Natural killer cell (primary cell): ENCODE measurements at regions of chr14 and their contacts with region 1.

Region 1: GRCh38 chr14:52351233-52352060 is 37.3 kb downstream of the PTGER2 start:
- DNase-seq: peak in 1 of 2 donors; percentile 34
- ATAC-seq: peak; percentile 41 to 51 (median 48)
- H3K4me3 ChIP-seq: no peak overlapping the region
- H3K4me3 Mint-ChIP-seq: peak overlapping the region; percentile 86
- H3K27ac ChIP-seq: peak overlapping the region; percentile 85
- H3K27ac Mint-ChIP-seq: peak overlapping the region; percentile 95
- H3K4me1 ChIP-seq: peaks cover 37% of the 10 kb centered on the region
- H3K4me1 Mint-ChIP-seq: peaks cover 75 to 83% of the 10 kb centered on the region in 2 donors
- H3K27me3 ChIP-seq: no peaks in the 10 kb centered on the region
- H3K27me3 Mint-ChIP-seq: no peaks in the 10 kb centered on the region
- CTCF ChIP-seq: no peak

Region 2: DNA sequence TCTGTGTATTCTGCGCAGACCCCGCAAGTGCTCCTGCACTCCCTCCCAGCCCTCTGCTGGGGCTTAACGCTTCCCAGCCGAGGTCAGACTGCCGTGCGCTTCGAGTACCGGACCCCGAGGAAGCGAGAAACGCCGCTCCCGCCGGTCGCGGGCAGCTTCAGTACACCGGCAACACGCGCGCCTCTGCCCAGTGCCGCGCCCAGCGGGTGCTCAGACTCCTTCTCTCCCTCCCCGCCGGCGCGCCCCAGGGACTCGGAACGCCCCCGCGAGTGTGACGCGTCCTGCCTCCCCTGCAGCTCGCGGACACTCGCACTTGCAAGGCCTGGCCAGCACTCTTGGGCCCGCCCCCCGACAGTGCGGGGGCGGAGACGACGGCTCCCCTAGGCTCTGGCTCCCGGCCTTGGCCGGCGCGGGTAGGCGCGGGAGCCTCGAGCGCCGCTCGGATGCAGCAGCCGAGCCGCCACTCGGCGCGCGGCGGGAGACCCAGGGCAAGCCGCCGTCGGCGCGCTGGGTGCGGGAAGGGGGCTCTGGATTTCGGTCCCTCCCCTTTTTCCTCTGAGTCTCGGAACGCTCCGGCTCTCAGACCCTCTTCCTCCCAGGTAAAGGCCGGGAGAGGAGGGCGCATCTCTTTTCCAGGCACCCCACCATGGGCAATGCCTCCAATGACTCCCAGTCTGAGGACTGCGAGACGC is 37.4 kb before region 1 on chr14 and contains the start of gene PTGER2:
- intact Hi-C with region 1: loop called (anchors 2 kb)
- DNase-seq: peak; percentile 79 to 81
- ATAC-seq: peak; percentile 75 to 85 (median 78)
- H3K4me3 ChIP-seq: peak within 1 kb of the TSS; percentile 86
- H3K4me3 Mint-ChIP-seq: peak within 1 kb of the TSS; percentile 98
- H3K27ac ChIP-seq: peak within 1 kb of the TSS; percentile 78
- H3K27ac Mint-ChIP-seq: peak within 1 kb of the TSS; percentile 95 to 99
- H3K4me1 ChIP-seq: peaks cover 44% of the 10 kb centered on the region
- H3K4me1 Mint-ChIP-seq: peaks cover 86 to 95% of the 10 kb centered on the region in 2 donors
- H3K27me3 ChIP-seq: no peaks in the 10 kb centered on the region
- H3K27me3 Mint-ChIP-seq: no peaks in the 10 kb centered on the region
- CTCF ChIP-seq: no peak
- total RNA-seq, gene PTGER2: 55.3 to 67.9 (median 60.6) TPM

Region 3: DNA sequence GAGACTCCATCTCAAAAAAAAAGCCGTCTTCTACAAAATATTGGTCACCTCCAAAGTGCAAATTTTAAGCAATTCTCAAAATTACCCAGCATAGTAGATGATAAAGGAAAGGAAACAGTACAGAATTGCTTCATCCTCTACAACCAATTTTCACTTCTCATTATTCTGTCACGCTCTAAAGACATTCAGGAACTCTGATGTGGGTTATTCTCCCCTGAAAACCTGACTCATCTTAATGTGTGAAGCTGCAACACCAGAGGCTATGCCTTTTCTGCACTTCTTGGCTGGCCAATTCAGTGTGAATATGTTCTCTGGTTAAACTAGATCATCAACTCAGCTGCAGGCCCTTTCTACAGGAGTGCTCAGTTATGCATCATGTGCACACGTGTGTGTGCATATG is 26.3 kb before region 1 on chr14:
- intact Hi-C with region 1: loop called (anchors 1 kb)
- DNase-seq: peak; percentile 37 to 63
- ATAC-seq: peak; percentile 83 to 94 (median 92)
- H3K4me3 ChIP-seq: no peak overlapping the region
- H3K4me3 Mint-ChIP-seq: peak overlapping the region; percentile 88
- H3K27ac ChIP-seq: peak overlapping the region; percentile 53
- H3K27ac Mint-ChIP-seq: peak overlapping the region; percentile 83 to 95
- H3K4me1 ChIP-seq: peaks cover 47% of the 10 kb centered on the region
- H3K4me1 Mint-ChIP-seq: peaks cover 87 to 89% of the 10 kb centered on the region in 2 donors
- H3K27me3 ChIP-seq: no peaks in the 10 kb centered on the region
- H3K27me3 Mint-ChIP-seq: no peaks in the 10 kb centered on the region
- CTCF ChIP-seq: no peak

Region 4: GRCh38 chr14:52336241-52336640 is 15.2 kb before region 1 on chr14:
- intact Hi-C with region 1: no loop called
- DNase-seq: no peak
- ATAC-seq: no peak
- H3K4me3 ChIP-seq: no peak overlapping the region
- H3K4me3 Mint-ChIP-seq: no peak overlapping the region
- H3K27ac ChIP-seq: no peak overlapping the region
- H3K27ac Mint-ChIP-seq: no peak overlapping the region
- H3K4me1 ChIP-seq: peaks cover 16% of the 10 kb centered on the region
- H3K4me1 Mint-ChIP-seq: peaks cover 40 to 54% of the 10 kb centered on the region in 2 donors
- H3K27me3 ChIP-seq: no peaks in the 10 kb centered on the region
- H3K27me3 Mint-ChIP-seq: no peaks in the 10 kb centered on the region
- CTCF ChIP-seq: no peak

Region 5: DNA sequence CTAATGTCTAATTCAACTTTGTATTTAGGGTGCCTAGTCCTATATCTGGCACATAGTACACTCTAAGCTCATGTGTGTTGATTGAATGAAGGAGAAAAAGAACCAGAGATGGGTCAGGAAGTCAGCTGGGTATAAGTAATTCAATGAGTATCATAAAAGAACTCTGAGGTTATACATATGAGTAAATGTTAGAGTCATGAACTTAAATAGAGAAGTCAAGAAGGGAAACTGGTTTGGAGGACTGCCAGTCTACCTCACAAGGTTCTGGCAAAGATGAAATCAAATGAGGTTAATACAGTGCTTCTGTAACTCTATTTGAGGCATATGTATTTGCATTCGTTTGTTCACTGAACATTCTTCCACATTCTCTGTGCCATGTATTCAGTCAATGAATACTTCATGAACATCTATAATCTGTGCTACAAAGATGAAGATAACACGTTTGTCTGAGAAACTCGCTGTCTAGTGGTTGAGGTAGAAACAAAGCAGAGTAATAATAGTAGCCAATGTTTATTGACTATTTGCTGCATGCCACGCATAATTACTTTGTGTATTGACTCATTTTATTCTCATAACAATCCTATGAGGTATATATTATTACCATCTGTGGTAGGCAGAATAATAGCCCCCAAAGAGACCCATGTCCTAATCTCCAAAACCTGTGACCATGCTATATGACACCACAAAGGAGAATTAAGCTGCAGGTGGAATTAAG is 51.5 kb after region 1 on chr14:
- intact Hi-C with region 1: loop called (anchors 10 kb)
- DNase-seq: peak in 1 of 2 donors; percentile 41
- ATAC-seq: peak in 2 of 3 donors; percentile 13 to 48
- H3K4me3 ChIP-seq: no peak overlapping the region
- H3K4me3 Mint-ChIP-seq: no peak overlapping the region
- H3K27ac ChIP-seq: no peak overlapping the region
- H3K27ac Mint-ChIP-seq: peak overlapping the region in 1 of 2 donors; percentile 25
- H3K4me1 ChIP-seq: peaks cover 6% of the 10 kb centered on the region
- H3K4me1 Mint-ChIP-seq: peaks cover 45% of the 10 kb centered on the region in 2 donors
- H3K27me3 ChIP-seq: no peaks in the 10 kb centered on the region
- H3K27me3 Mint-ChIP-seq: peaks cover 0 to 6% of the 10 kb centered on the region in 2 donors
- CTCF ChIP-seq: no peak